Activated CD4-positive, alpha-beta T cell treated with anti-CD3 and anti-CD28 coated beads for 36 hours (primary cell): ENCODE measurements at regions of chr1 and their contacts with region 1.

Region 1: DNA sequence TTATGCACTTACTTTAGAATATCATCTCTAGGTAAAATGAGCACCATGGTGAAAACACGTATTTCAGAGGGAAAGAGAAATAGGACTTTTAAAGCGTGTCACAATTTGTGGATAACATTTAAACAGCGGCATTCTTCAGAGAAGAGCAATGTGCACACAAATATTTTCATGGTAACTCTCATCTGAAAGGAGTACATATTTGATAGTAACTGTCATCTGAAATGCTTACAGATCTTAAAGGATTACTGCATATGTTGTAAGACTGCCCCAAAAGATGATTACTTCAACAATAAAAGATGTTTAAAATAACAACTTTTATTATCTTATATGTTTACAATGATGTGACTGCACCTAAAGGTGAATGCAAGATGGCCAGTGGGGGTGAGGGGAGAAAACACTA is 408.8 kb downstream of the PLA2G4A start:
- DNase-seq: no peak
- ATAC-seq: no peak
- H3K4me3 Mint-ChIP-seq: no peak overlapping the region
- H3K27ac Mint-ChIP-seq: no peak overlapping the region
- H3K4me1 Mint-ChIP-seq: no peaks in the 10 kb centered on the region
- H3K27me3 Mint-ChIP-seq: no peaks in the 10 kb centered on the region

Region 2: GRCh38 chr1:187252923-187253322 is 15.4 kb after region 1 on chr1:
- CTCF ChIA-PET with region 1: no interaction called
- POLR2A ChIA-PET with region 1: no interaction called
- intact Hi-C with region 1: loop called in 1 of 2 experiments (anchors 2 kb)
- DNase-seq: no peak
- ATAC-seq: no peak
- H3K4me3 Mint-ChIP-seq: no peak overlapping the region
- H3K27ac Mint-ChIP-seq: no peak overlapping the region
- H3K4me1 Mint-ChIP-seq: no peaks in the 10 kb centered on the region
- H3K27me3 Mint-ChIP-seq: no peaks in the 10 kb centered on the region